ENCODE measurements at regions of chr2 and their contacts with region 1.

Region 1: GRCh38 chr2:68742626-68743415 is 8.2 kb downstream of the ARHGAP25 start:
- DNase-seq: no peak
- H3K4me3 Mint-ChIP-seq: peak overlapping the region; percentile 40
- H3K27ac Mint-ChIP-seq: peak overlapping the region; percentile 75
- H3K4me1 Mint-ChIP-seq: peaks cover 90% of the 10 kb centered on the region
- H3K27me3 Mint-ChIP-seq: no peaks in the 10 kb centered on the region

Region 2: DNA sequence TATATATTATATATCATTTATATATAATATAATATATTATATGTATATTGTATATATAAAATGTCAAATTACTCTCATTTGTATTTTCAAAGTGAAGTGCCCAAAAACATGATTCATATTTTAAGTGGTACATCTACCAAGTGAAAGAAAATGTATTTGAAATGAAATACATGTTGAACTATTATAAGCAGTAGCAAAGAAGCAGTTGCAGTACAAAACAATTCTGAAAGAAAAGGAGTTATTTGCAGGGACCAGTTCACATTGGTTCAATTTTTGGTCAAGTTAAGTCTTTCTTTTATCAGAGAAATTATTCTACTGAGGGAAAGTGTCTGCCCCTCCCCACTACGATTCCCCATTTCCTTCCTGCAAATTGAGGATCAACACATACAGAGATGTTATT is 223.6 kb before region 1 on chr2:
- CTCF ChIA-PET with region 1: no interaction called
- POLR2A ChIA-PET with region 1: no interaction called
- intact Hi-C with region 1: no loop called
- DNase-seq: no peak
- H3K4me3 Mint-ChIP-seq: no peak overlapping the region
- H3K27ac Mint-ChIP-seq: no peak overlapping the region
- H3K4me1 Mint-ChIP-seq: peaks cover 8% of the 10 kb centered on the region
- H3K27me3 Mint-ChIP-seq: no peaks in the 10 kb centered on the region

Region 3: GRCh38 chr2:68721482-68722101 is 21.2 kb before region 1 on chr2:
- CTCF ChIA-PET with region 1: interaction called, 57 read pairs
- POLR2A ChIA-PET with region 1: interaction called, 16 read pairs
- intact Hi-C with region 1: loop called (anchors 1 kb)
- DNase-seq: peak; percentile 62
- H3K4me3 Mint-ChIP-seq: peak overlapping the region; percentile 61
- H3K27ac Mint-ChIP-seq: peak overlapping the region; percentile 85
- H3K4me1 Mint-ChIP-seq: peaks cover 90% of the 10 kb centered on the region
- H3K27me3 Mint-ChIP-seq: no peaks in the 10 kb centered on the region

Region 4: GRCh38 chr2:68726608-68727367 is 16.0 kb before region 1 on chr2:
- CTCF ChIA-PET with region 1: interaction called, 57 read pairs
- POLR2A ChIA-PET with region 1: interaction called, 16 read pairs
- intact Hi-C with region 1: loop called (anchors 1 kb)
- DNase-seq: peak; percentile 93
- H3K4me3 Mint-ChIP-seq: peak overlapping the region; percentile 28
- H3K27ac Mint-ChIP-seq: peak overlapping the region; percentile 88
- H3K4me1 Mint-ChIP-seq: peaks cover 77% of the 10 kb centered on the region
- H3K27me3 Mint-ChIP-seq: no peaks in the 10 kb centered on the region

Region 5: DNA sequence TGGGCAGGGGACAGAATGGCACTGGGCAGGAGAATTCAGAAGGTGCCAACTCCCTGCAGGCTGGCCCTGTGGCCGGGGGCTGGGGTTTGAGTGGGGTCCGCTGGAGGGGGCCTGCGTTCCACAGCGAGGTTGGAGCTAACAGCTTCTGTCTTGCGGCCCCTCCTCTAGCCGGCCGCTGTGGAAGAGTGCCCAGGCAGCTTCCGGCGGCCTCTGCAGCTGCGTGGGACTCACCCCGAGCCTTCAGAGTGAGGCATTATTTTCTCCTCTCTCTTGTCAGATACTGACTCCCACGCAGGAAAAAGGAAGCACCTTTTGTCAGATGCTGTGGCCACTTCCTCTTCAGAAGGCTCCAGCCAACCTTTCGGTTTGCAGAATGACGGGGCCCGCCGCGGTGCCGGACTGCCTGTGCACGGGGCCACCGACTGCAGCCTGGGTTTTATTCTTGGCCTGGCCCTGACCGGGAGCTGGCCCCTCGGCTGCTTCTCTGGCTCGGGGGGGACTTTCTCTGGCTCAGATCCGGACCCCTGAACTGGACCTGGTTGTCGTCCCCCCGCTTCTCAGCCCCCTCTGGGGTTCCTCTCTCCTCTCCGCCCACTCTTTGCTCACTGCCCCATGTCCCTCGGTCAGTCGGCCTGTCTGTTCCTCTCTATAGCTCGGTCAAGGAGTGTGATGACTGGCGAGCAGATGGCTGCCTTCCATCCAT is 31.9 kb after region 1 on chr2:
- CTCF ChIA-PET with region 1: interaction called, 7 read pairs
- POLR2A ChIA-PET with region 1: interaction called, 13 read pairs
- intact Hi-C with region 1: no loop called
- DNase-seq: peak; percentile 83
- H3K4me3 Mint-ChIP-seq: peak overlapping the region; percentile 65
- H3K27ac Mint-ChIP-seq: peak overlapping the region; percentile 85
- H3K4me1 Mint-ChIP-seq: peaks cover 87% of the 10 kb centered on the region
- H3K27me3 Mint-ChIP-seq: no peaks in the 10 kb centered on the region

Region 6: DNA sequence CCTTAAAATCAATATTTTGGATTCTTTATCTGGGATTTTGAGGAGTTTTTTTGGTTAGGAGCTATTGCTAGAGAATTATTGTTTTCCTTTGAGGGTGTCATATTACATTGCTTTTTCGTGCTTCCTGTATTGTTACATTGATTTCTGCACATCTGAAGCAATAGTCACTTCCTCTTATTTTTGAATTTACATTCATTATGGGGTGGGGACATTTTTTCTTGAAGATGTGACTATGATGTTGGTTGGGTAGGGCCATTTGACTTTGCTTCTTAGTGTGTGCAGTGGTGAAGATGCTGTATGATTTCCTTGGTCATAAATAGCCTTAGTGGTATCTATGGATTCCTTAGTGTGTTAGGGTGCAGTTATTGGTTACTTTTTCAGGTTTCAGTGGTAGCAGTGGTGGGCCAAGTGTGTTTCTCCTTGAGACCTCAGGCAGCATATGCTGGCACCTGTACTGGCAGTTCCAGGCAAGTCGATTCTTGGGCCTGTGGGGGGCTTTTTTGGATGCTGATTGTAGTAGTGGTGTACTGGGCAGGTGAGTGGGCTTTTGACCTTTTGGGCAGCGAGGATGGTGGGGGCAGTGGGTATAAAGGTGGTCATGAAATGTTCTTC is 53.6 kb after region 1 on chr2:
- CTCF ChIA-PET with region 1: no interaction called
- POLR2A ChIA-PET with region 1: no interaction called
- intact Hi-C with region 1: no loop called
- DNase-seq: peak; percentile 40
- H3K4me3 Mint-ChIP-seq: peak overlapping the region; percentile 32
- H3K27ac Mint-ChIP-seq: peak overlapping the region; percentile 90
- H3K4me1 Mint-ChIP-seq: peaks cover 80% of the 10 kb centered on the region
- H3K27me3 Mint-ChIP-seq: no peaks in the 10 kb centered on the region

Region 7: GRCh38 chr2:68971591-68972231 is 228.9 kb after region 1 on chr2:
- CTCF ChIA-PET with region 1: no interaction called
- POLR2A ChIA-PET with region 1: no interaction called
- intact Hi-C with region 1: no loop called
- DNase-seq: peak; percentile 13
- H3K4me3 Mint-ChIP-seq: no peak overlapping the region
- H3K27ac Mint-ChIP-seq: no peak overlapping the region
- H3K4me1 Mint-ChIP-seq: no peaks in the 10 kb centered on the region
- H3K27me3 Mint-ChIP-seq: peaks cover 10% of the 10 kb centered on the region

Measured in activated CD4-positive, alpha-beta memory T cell treated with anti-CD3 and anti-CD28 coated beads for 36 hours (primary cell).